ENCODE measurements at regions of chr2 and their contacts with region 1.

Region 1: DNA sequence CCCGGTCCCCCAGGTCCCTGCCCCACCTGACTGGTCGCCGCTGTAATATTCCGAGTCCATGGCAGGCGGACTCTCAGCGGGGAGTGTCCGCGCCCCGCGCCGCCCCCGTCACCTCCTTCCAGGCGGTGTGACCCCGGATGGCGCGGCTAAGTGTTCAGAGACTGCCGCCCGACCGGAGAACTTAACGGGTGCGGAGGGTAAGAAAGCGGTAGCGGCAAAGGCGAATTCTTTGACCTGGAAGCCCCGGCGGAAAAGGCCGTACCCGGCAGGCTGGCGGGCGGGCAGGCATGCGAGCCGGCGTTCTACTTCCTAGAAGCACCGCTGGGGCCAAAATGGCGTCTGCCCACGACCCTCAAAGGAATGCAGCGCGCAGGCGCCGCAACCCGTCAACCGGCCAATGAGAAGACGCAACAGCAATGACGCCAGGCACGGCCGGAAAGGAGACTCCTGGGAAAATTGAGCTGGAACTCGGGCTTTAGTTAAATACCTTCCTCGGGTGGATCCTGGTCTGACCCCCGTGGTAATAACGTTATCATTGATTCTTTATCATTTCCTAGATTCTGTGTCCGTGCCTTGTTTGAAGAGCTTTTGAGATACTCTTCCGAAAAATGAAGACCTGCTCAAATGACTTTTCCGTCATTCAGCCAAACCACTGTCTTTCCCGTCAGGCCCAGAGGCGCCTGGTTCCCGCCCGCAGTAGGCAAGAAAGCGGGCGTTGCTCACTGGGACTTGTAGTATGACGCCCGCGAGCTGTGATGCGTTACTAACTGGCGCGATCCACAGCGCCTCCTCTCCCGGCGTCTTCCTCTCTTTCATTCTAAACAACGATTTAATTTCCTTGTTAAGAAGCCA is at the start of gene IWS1:
- DNase-seq: peak; percentile 83 to 98
- H3K4me3 ChIP-seq: peak within 1 kb of the TSS; percentile 84 to 86
- H3K27ac ChIP-seq: peak within 1 kb of the TSS; percentile 84 to 95
- H3K4me1 ChIP-seq: peaks cover 0 to 10% of the 10 kb centered on the region in 2 donors
- H3K27me3 ChIP-seq: no peaks in the 10 kb centered on the region
- CTCF ChIP-seq: peak; percentile 21 to 54 (median 27)
- total RNA-seq, gene IWS1: 54.6 TPM

Region 2: DNA sequence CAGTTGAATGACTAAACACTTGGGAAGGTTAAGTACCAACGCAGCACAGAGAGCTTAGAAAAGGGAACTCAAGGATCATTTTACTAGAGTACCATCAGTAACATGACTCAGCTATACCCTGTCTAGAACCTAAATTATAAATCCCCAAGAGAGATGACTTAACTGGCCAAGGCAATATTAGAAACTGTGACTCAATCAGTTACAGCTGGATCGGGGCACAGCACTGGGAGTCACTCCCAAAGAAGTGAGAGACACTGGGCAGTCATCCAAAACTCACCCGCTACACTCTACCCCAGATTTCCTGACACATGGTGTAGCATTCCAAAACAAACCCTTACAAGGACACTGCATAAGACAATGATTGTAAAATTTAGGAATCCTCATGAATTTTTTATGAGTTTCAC is 17.7 kb before region 1 on chr2:
- intact Hi-C with region 1: loop called (anchors 1 kb)
- DNase-seq: peak; percentile 57 to 94
- H3K4me3 ChIP-seq: no peak overlapping the region
- H3K27ac ChIP-seq: peak overlapping the region; percentile 59 to 78
- H3K4me1 ChIP-seq: peaks cover 0 to 16% of the 10 kb centered on the region in 2 donors
- H3K27me3 ChIP-seq: no peaks in the 10 kb centered on the region
- CTCF ChIP-seq: no peak

Region 3: DNA sequence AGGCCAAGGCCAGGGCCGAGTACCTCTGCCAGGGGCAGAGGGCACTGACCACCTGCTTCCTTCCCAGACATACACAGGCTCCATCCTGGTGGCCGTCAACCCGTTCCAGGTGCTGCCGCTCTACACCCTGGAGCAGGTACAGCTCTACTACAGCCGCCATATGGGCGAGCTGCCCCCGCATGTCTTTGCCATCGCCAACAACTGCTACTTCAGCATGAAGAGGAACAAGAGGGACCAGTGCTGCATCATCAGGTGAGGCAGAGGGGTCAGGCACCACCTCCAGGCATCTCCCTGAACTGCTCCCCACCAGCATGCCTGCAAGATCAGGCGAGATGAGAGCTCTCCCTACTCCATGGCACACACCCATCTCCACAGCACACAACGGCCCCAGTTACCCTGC is 40.2 kb after region 1 on chr2:
- intact Hi-C with region 1: loop called (anchors 2 kb)
- DNase-seq: peak in 1 of 2 donors; percentile 50
- H3K4me3 ChIP-seq: no peak overlapping the region
- H3K27ac ChIP-seq: no peak overlapping the region
- H3K4me1 ChIP-seq: peaks cover 14 to 34% of the 10 kb centered on the region in 2 donors
- H3K27me3 ChIP-seq: no peaks in the 10 kb centered on the region
- CTCF ChIP-seq: no peak

Region 4: DNA sequence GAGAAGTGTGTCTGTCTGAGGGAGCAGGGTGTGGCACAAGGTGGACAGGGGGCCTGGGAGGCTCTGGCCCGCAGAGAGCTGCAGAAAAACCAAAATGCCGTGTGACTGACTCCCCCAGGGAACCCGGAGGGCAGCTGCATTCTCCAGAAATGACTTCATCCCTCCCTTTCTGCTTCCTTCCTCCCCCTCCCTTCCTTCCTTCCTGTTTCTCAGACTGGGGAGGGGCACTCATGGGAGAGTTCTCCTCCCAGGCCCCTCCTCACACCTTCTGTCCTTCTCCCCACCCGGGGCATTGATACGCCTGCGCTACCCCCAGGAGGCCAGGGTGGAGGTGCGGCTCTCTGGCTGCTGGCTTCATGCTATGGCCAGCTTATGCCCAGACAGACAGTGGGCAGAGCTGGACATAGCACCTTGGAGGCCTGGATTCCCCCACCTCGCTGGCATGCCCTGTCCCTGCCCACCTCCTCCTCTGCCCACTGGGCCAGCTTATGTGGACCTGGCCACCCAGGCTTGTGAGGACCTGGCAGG is 111.4 kb after region 1 on chr2:
- intact Hi-C with region 1: loop called (anchors 5 kb)
- DNase-seq: no peak
- H3K4me3 ChIP-seq: no peak overlapping the region
- H3K27ac ChIP-seq: peak overlapping the region; percentile 87 to 90
- H3K4me1 ChIP-seq: peaks cover 16 to 36% of the 10 kb centered on the region in 2 donors
- H3K27me3 ChIP-seq: no peaks in the 10 kb centered on the region
- CTCF ChIP-seq: no peak

Region 5: DNA sequence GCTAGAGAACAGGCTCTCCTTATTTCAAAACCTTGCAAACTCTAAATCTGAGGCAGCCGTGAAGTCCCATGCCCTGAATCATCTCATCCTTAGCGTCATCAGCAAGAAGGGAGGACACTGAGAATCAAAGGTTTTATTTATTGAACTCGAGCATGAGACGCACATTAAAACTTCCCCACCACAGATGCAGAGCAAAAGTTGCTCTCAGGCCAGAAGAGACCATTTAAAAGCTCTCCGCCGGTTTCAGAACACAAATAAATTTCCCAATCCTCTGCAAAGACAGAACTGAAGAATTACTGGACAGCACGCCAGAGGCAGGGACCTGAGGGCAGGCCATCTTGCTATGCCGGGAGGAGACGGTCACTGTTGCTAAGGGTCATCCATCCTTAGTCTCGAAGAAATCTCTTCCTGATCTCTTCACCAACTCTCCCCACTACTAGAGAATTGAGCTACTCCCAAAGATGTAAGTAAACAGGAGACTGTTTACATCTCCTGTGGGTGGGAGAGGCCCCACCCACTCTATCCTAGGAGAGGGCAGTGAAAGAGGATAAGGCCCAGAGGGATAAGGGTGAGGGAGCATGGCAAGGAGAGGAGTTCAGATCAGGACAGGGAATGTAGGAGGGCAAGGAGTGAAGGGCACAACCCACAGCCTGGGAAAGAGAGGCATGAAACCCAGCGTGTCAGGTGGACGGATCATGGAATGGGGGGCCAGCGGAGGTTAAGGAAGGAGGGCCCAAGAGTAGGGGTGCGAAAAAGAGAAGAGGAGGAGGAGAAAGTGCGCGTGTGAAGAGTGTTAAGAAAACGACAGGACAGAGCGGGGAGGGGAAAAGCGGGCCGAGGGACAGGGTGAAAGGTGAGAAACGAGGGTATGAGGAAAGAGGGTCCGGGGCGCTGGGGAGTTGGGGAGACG is 358.3 kb after region 1 on chr2:
- intact Hi-C with region 1: loop called (anchors 10 kb)
- DNase-seq: no peak
- H3K4me3 ChIP-seq: peak overlapping the region; percentile 67 to 69
- H3K27ac ChIP-seq: peak overlapping the region; percentile 85 to 88
- H3K4me1 ChIP-seq: peaks cover 9 to 33% of the 10 kb centered on the region in 2 donors
- H3K27me3 ChIP-seq: no peaks in the 10 kb centered on the region
- CTCF ChIP-seq: no peak

Region 6: DNA sequence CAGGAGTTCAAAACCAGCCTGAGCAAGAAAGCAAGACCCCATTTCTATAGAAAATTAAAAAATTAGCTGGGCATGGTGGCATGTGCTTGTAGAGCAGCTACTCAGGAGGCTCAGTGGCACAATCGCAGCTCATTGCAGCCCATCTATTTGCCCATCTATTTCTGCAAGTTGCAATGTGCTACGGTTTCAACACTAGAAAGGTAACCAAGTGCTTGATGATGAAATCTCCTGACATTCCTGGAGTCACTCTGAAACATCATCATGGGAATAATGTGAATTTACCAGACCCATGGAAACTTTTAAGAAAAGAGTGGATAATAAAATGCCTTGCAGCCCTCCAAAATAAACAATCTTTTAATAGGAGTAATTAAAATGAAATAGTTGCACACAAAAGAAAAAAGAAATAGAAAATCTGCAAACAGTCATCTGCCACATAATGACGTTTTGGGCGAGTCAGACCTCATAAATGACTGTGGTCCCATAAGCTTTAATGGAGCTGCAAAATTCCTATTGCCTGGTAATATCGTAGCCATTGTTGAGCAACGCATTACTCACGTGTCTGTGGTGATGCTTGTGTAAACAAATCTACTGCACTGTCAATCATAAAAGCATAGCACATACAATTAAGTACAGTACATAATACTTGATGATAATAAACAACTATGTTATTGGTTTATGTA is 406.0 kb after region 1 on chr2:
- intact Hi-C with region 1: no loop called
- DNase-seq: no peak
- H3K4me3 ChIP-seq: no peak overlapping the region
- H3K27ac ChIP-seq: no peak overlapping the region
- H3K4me1 ChIP-seq: no peaks in the 10 kb centered on the region
- H3K27me3 ChIP-seq: no peaks in the 10 kb centered on the region
- CTCF ChIP-seq: no peak

Measured in ascending aorta (tissue), 2 donors.